CD4-positive, alpha-beta T cell (primary cell): ENCODE measurements at regions of chr17 and their contacts with region 1.

Region 1: DNA sequence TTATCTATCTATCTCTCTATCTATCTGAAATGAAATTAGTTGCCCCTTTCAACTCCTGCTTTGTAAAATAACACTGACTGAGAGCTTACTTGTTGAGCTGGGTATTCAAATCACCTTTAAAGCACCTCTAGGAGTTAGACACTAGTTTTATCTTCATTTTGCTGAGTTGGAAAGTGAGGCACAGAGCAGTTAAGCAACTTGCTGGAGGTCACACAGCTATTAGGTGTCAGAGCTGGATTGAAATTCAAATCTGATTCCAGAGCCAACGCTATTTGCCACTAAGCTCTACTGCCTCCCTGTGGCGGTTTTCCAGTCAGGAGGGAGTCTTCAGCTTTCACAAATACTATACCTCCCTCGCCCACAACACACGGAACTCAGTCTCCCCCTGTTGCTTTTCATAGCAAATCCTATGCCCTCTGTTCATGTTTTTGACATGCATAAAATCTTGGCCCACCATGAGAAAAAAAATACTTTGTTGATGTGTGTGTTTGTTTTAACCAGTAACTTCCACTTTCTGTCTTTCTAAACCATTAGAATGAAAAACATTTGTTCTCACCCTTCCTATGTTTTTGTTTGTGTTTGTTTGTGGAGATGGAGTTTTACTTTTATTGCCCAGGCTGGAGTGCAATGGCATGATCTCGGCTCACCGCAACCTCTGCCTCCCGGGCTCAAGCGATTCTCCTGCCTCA is 74.8 kb upstream of the SMURF2 start:
- DNase-seq: peak; percentile 31 to 65 (median 48)
- ATAC-seq: peak; percentile 88
- H3K4me3 ChIP-seq: no peak overlapping the region
- H3K4me3 Mint-ChIP-seq: no peak overlapping the region
- H3K27ac ChIP-seq: no peak overlapping the region
- H3K27ac Mint-ChIP-seq: no peak overlapping the region
- H3K4me1 ChIP-seq: no peaks in the 10 kb centered on the region
- H3K4me1 Mint-ChIP-seq: peaks cover 12% of the 10 kb centered on the region
- H3K27me3 ChIP-seq: no peaks in the 10 kb centered on the region
- H3K27me3 Mint-ChIP-seq: no peaks in the 10 kb centered on the region
- CTCF ChIP-seq: peak; percentile 74

Region 2: GRCh38 chr17:64369007-64369893 is 367.7 kb before region 1 on chr17:
- CTCF ChIA-PET with region 1: no interaction called
- POLR2A ChIA-PET with region 1: no interaction called
- intact Hi-C with region 1: no loop called
- DNase-seq: no peak
- ATAC-seq: no peak
- H3K4me3 ChIP-seq: no peak overlapping the region
- H3K4me3 Mint-ChIP-seq: no peak overlapping the region
- H3K27ac ChIP-seq: no peak overlapping the region
- H3K27ac Mint-ChIP-seq: no peak overlapping the region
- H3K4me1 ChIP-seq: no peaks in the 10 kb centered on the region
- H3K4me1 Mint-ChIP-seq: no peaks in the 10 kb centered on the region
- H3K27me3 ChIP-seq: no peaks in the 10 kb centered on the region
- H3K27me3 Mint-ChIP-seq: no peaks in the 10 kb centered on the region
- CTCF ChIP-seq: no peak

Region 3: GRCh38 chr17:64572638-64573154 is 164.3 kb before region 1 on chr17:
- CTCF ChIA-PET with region 1: no interaction called
- POLR2A ChIA-PET with region 1: no interaction called
- intact Hi-C with region 1: loop called in 1 of 2 experiments (anchors 5 kb)
- DNase-seq: peak in 3 of 14 experiments; percentile 9 to 49 (median 13)
- ATAC-seq: peak; percentile 79
- H3K4me3 ChIP-seq: no peak overlapping the region
- H3K4me3 Mint-ChIP-seq: no peak overlapping the region
- H3K27ac ChIP-seq: no peak overlapping the region
- H3K27ac Mint-ChIP-seq: peak overlapping the region; percentile 82
- H3K4me1 ChIP-seq: peaks cover 9% of the 10 kb centered on the region
- H3K4me1 Mint-ChIP-seq: peaks cover 17% of the 10 kb centered on the region
- H3K27me3 ChIP-seq: no peaks in the 10 kb centered on the region
- H3K27me3 Mint-ChIP-seq: no peaks in the 10 kb centered on the region
- CTCF ChIP-seq: no peak

Region 4: DNA sequence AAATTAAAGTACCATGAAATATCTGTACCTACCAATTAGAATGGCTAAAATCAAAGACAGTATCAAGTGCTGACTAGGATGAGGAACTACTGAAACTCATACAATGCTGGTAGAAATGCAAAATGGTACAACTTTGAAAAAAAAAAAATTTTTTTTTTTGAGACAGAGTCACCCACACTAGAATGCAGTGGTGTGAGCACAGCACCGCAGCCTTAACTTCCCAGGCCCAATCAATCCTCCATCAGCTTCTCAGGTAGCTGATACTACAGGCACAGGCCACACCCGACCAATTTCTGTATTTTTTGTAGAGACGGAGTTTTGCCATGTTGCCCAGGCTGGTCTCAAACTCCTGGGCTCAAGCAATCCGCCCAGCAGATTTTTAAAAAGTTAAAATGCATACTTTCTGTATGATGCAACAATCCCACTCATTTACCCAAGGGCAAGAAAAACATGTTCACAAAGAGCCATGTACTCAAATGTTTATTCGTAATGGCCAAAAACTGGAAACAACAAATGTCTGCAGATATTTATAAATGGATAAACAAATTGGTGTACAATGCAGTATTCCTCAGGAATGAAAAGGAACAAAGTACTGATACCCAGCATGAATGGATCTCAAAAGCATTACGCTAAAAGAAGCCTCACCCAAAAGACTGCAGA is 83.5 kb before region 1 on chr17:
- CTCF ChIA-PET with region 1: interaction called, 5 read pairs
- POLR2A ChIA-PET with region 1: no interaction called
- intact Hi-C with region 1: loop called in 1 of 2 experiments (anchors 5 kb)
- DNase-seq: no peak
- ATAC-seq: no peak
- H3K4me3 ChIP-seq: no peak overlapping the region
- H3K4me3 Mint-ChIP-seq: no peak overlapping the region
- H3K27ac ChIP-seq: no peak overlapping the region
- H3K27ac Mint-ChIP-seq: no peak overlapping the region
- H3K4me1 ChIP-seq: peaks cover 16% of the 10 kb centered on the region
- H3K4me1 Mint-ChIP-seq: peaks cover 70% of the 10 kb centered on the region
- H3K27me3 ChIP-seq: no peaks in the 10 kb centered on the region
- H3K27me3 Mint-ChIP-seq: no peaks in the 10 kb centered on the region
- CTCF ChIP-seq: no peak